ENCODE measurements at regions of chrX and their contacts with region 1.

Region 1: DNA sequence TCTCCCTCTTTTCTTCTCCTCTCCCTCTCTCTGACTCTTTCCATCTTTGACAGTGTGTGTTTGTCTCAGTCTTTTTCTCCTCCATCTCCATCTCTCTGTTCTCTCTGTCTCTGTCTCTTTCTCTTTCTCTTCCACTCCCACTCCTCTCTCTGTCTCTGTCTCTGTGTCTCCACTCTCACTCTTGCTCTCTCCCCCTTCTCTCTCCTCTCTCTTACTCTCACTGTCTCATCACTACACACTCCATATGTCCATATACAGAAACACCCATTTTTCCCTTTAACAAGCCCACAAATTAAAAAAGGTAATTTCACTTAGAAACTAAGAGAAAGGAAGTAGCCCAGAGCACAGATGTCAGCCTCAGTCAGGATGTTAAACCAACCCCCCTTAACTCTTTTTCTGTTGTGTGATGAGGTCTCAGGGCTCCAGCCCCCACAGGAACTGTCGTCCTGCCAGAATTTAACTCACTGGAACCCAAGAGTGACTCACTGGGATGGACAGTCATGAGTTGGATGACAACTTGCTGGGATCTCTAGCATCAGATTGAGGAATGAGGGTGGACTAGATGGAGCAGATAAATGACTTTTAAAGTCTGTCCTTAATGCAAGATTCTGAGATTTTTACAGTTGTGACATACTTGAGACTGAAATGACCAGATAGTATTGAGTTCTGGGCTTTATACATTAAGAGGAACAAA is 27.5 kb downstream of the OTUD6A start:
- DNase-seq: no peak
- ATAC-seq: no peak
- H3K4me3 ChIP-seq: no peak overlapping the region
- H3K27ac ChIP-seq: no peak overlapping the region
- H3K4me1 ChIP-seq: no peaks in the 10 kb centered on the region
- H3K27me3 ChIP-seq: no peaks in the 10 kb centered on the region
- CTCF ChIP-seq: no peak
- EP300 ChIP-seq: no peak
- POLR2A ChIP-seq: no peak
- RAD21 ChIP-seq: no peak

Region 2: DNA sequence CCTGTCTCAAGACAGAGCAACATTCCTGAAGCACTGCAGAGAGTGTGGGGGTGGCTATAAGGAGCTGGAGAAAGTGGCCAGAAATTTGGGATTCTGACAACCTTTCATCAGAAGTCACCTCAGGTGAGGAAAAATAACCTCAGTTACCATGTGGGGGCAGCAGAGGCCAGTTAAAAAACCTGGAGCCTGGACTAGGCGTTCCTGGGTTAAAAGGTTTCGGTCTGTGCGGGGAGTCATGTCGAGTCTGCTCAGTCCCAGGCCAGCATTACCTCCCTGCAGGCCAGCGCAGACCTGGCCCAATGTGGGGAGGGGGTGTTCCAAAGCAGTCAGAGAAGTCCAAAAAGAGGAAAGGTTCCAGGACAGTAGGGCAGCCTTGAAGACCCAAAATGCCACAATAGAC is 596.6 kb before region 1 on chrX:
- CTCF ChIA-PET with region 1: interaction called, 4 read pairs
- POLR2A ChIA-PET with region 1: no interaction called
- in situ Hi-C with region 1: loop called (anchors 5 kb)
- intact Hi-C with region 1: no loop called
- DNase-seq: peak; percentile 44
- ATAC-seq: peak; percentile 93
- H3K4me3 ChIP-seq: peak overlapping the region in 1 of 3 experiments; percentile 50; a peak in 2 of 6 replicates
- H3K27ac ChIP-seq: no peak overlapping the region
- H3K4me1 ChIP-seq: peaks cover 7% of the 10 kb centered on the region; the same call in 1 of the 2 replicates
- H3K27me3 ChIP-seq: peaks cover 0 to 4% of the 10 kb centered on the region in 2 experiments; a peak in 1 of 5 replicates
- CTCF ChIP-seq: peak; percentile 78
- EP300 ChIP-seq: no peak
- POLR2A ChIP-seq: no peak
- RAD21 ChIP-seq: peak; percentile 71

Region 3: DNA sequence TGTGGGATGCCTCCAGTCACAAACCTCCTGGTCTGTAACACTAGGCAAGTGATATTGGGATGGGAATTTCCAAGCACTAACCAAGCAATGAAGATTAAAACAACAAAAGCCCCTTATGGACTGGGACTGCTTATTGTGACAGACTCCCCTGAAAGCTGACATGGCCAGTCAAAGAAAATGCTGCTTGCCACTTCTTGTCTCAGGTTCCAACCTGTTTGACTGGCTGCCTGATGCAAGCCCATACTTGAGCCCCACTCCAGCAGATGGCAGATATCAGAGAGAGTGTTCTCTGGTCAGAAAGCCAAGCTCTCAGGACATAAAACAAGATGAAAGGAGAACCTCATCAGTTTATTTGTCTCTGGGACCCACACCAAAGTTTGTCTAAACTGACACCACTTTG is 28.0 kb after region 1 on chrX:
- CTCF ChIA-PET with region 1: no interaction called
- POLR2A ChIA-PET with region 1: no interaction called
- in situ Hi-C with region 1: no loop called
- intact Hi-C with region 1: no loop called
- DNase-seq: no peak
- ATAC-seq: no peak
- H3K4me3 ChIP-seq: no peak overlapping the region
- H3K27ac ChIP-seq: no peak overlapping the region
- H3K4me1 ChIP-seq: no peaks in the 10 kb centered on the region
- H3K27me3 ChIP-seq: no peaks in the 10 kb centered on the region
- CTCF ChIP-seq: no peak
- EP300 ChIP-seq: no peak
- POLR2A ChIP-seq: no peak
- RAD21 ChIP-seq: no peak

Measured in HepG2 (cell line).